ENCODE measurements at regions of chr2 and their contacts with region 1.

Region 1: DNA sequence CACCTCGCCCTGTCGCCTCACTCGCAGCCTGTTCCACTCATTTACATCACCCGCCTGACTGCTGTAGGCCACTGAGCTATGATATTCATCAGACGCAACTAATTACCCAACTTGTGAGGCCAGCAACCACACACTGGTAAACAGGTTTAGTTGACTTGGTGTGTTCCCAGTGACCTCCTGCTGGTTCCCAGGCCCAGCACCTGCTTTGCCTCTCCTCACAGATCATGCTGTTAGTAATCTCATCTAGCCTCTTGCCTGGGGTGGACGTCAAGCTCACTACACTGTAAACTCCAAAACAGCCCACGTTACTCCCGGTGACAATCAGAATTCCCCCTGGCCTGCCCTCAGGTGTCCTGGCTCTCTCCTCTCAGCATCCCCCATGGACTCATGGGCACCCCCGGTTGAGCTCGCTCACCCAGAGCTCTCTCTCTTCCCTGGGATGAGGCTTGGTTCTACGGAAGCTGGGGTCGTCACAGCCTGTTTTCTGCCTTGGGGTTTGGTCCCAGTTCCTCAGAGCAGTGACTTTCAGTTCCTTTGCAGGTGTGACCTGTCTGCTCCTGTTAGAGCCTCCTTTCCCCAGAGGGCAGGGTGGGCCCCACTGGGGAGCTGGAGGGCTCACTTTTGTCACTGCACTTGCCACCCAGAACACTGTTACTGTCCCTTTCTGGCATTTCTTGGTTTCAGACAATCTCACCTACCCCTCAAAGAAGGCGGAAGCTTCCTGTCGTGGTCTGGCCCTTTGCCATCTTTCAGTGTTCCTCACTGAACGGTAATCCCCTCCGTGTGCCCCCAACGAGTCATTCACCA is 40.3 kb downstream of the INPP5D start:
- H3K4me3 ChIP-seq: no peak overlapping the region
- H3K27ac ChIP-seq: no peak overlapping the region
- H3K4me1 ChIP-seq: no peaks in the 10 kb centered on the region
- CTCF ChIP-seq: no peak

Region 2: GRCh38 chr2:233251306-233252116 is 151.1 kb after region 1 on chr2 and contains the start of gene ATG16L1:
- CTCF ChIA-PET with region 1: interaction called, 20 read pairs
- POLR2A ChIA-PET with region 1: interaction called, 3 read pairs
- H3K4me3 ChIP-seq: peak within 1 kb of the TSS; percentile 98
- H3K27ac ChIP-seq: peak within 1 kb of the TSS; percentile 45
- H3K4me1 ChIP-seq: no peaks in the 10 kb centered on the region
- CTCF ChIP-seq: peak; percentile 99

Region 3: GRCh38 chr2:233338046-233338445 is 237.7 kb after region 1 on chr2:
- CTCF ChIA-PET with region 1: no interaction called
- POLR2A ChIA-PET with region 1: no interaction called
- H3K4me3 ChIP-seq: no peak overlapping the region
- H3K27ac ChIP-seq: no peak overlapping the region
- H3K4me1 ChIP-seq: no peaks in the 10 kb centered on the region
- CTCF ChIP-seq: 0 out of 2 replicates have a peak, but pooled peaks have one; percentile 41